Ascending aorta (tissue), 2 donors: ENCODE measurements at regions of chr1 and their contacts with region 1.

Region 1: GRCh38 chr1:48498096-48498791 is 26.2 kb upstream of the SPATA6 start:
- DNase-seq: peak in 1 of 2 donors; percentile 88
- H3K4me3 ChIP-seq: no peak overlapping the region
- H3K27ac ChIP-seq: no peak overlapping the region
- H3K4me1 ChIP-seq: peaks cover 0 to 3% of the 10 kb centered on the region in 2 donors
- H3K27me3 ChIP-seq: no peaks in the 10 kb centered on the region
- CTCF ChIP-seq: peak; percentile 62 to 91 (median 86)

Region 2: GRCh38 chr1:48356901-48357300 is 141.3 kb before region 1 on chr1:
- intact Hi-C with region 1: loop called (anchors 5 kb)
- DNase-seq: no peak
- H3K4me3 ChIP-seq: no peak overlapping the region
- H3K27ac ChIP-seq: no peak overlapping the region
- H3K4me1 ChIP-seq: no peaks in the 10 kb centered on the region
- H3K27me3 ChIP-seq: no peaks in the 10 kb centered on the region
- CTCF ChIP-seq: peak in 1 of 3 experiments; percentile 18

Region 3: GRCh38 chr1:48450505-48450904 is 47.7 kb before region 1 on chr1:
- intact Hi-C with region 1: loop called (anchors 2 kb)
- DNase-seq: no peak
- H3K4me3 ChIP-seq: no peak overlapping the region
- H3K27ac ChIP-seq: no peak overlapping the region
- H3K4me1 ChIP-seq: no peaks in the 10 kb centered on the region
- H3K27me3 ChIP-seq: no peaks in the 10 kb centered on the region
- CTCF ChIP-seq: peak in 2 of 3 experiments; percentile 12 to 17